Activated naive CD4-positive, alpha-beta T cell treated with anti-CD3 and anti-CD28 coated beads for 36 hours (primary cell): ENCODE measurements at regions of chr22 and their contacts with region 1.

Region 1: GRCh38 chr22:31272522-31273446 is 19.5 kb downstream of the PIK3IP1 start:
- DNase-seq: peak; percentile 76
- H3K4me3 Mint-ChIP-seq: no peak overlapping the region
- H3K27ac Mint-ChIP-seq: no peak overlapping the region
- H3K4me1 Mint-ChIP-seq: peaks cover 58% of the 10 kb centered on the region
- H3K27me3 Mint-ChIP-seq: no peaks in the 10 kb centered on the region

Region 2: DNA sequence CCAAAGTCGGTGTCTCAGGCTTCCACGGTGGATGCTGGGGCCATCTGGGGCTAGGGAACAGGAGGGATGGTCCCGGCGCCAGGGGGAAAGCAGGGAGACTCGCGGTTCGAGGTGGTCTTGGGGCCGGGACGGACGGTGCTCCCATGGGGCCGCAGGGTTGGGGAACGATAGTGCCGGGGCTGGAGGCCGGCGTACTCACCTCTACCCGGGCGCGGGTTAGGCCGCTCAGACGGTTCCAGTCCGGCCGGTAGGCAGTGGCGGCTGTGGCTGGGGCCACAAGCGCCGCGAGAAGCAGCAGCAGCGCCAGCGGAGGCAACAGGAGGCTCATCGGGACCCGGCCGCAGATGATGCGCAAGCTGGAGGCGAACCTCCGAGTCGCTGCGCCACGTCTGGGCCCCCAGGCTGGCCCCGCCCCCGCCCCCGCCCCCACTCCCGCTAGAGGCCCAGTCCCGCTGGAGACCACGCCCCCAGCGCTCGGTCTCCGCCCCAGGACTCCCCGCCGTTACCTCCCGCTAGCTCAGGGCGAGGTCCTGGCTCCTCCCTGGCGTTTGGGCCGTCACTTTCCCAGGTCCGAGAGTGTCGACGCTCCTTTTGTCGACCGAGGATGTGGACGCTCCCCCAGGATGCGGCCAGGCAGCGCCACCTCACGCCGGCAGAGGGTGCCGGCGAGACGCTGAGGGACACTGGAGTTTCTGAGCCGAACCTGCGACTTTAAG is 165.4 kb before region 1 on chr22 and contains the start of gene SELENOM:
- CTCF ChIA-PET with region 1: interaction called, 13 read pairs
- intact Hi-C with region 1: loop called (anchors 2 kb)
- DNase-seq: peak; percentile 92
- H3K4me3 Mint-ChIP-seq: peak within 1 kb of the TSS; percentile 89
- H3K27ac Mint-ChIP-seq: peak within 1 kb of the TSS; percentile 76
- H3K4me1 Mint-ChIP-seq: peaks cover 19% of the 10 kb centered on the region
- H3K27me3 Mint-ChIP-seq: no peaks in the 10 kb centered on the region
- total RNA-seq, gene SELENOM: 9.3 to 11.0 TPM

Region 3: GRCh38 chr22:31127181-31127772 is 145.5 kb before region 1 on chr22:
- CTCF ChIA-PET with region 1: no interaction called
- intact Hi-C with region 1: no loop called
- DNase-seq: no peak
- H3K4me3 Mint-ChIP-seq: no peak overlapping the region
- H3K27ac Mint-ChIP-seq: no peak overlapping the region
- H3K4me1 Mint-ChIP-seq: no peaks in the 10 kb centered on the region
- H3K27me3 Mint-ChIP-seq: peaks cover 4% of the 10 kb centered on the region

Region 4: GRCh38 chr22:31179356-31179755 is 93.4 kb before region 1 on chr22:
- CTCF ChIA-PET with region 1: no interaction called
- intact Hi-C with region 1: no loop called
- DNase-seq: no peak
- H3K4me3 Mint-ChIP-seq: no peak overlapping the region
- H3K27ac Mint-ChIP-seq: no peak overlapping the region
- H3K4me1 Mint-ChIP-seq: peaks cover 27% of the 10 kb centered on the region
- H3K27me3 Mint-ChIP-seq: no peaks in the 10 kb centered on the region

Region 5: DNA sequence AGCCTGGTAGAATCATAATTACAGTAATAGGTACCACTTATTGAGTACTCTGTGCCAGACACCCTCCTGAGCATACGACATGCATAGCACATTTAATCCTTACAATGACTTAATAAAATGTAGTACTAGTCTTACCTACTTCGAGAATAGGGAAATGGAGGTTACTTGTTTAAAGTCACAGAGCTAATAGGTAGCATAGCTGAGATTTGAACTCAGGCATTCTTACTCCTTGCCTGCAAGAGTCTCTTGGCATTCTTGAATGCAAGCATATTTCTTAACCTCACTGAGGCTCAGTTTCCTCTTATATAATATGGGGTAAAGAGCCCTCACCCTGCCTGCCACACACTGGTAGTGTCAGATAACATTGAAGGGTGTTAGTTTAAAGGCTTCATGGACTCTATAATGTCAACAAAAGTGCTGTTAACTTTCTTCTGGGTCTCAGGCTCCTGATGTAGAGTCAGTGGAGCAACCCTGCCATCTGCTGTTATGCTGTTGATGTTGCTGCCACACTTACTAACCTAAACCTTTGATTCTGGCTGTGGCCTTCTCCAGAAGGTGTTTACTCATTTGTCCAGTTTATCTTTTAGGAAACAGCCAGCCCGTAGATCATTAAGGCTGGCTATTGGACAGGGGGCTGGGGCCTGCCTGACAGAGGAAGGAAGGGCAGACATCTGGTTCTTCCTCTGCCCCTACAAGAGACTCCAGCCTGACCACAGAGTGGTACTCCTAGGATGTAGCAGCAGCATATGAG is 41.7 kb before region 1 on chr22:
- CTCF ChIA-PET with region 1: interaction called, 10 read pairs
- intact Hi-C with region 1: no loop called
- DNase-seq: peak; percentile 60
- H3K4me3 Mint-ChIP-seq: no peak overlapping the region
- H3K27ac Mint-ChIP-seq: no peak overlapping the region
- H3K4me1 Mint-ChIP-seq: peaks cover 28% of the 10 kb centered on the region
- H3K27me3 Mint-ChIP-seq: no peaks in the 10 kb centered on the region

Region 6: GRCh38 chr22:31284281-31285155 is 11.7 kb after region 1 on chr22:
- CTCF ChIA-PET with region 1: interaction called, 32 read pairs
- intact Hi-C with region 1: no loop called
- DNase-seq: no peak
- H3K4me3 Mint-ChIP-seq: no peak overlapping the region
- H3K27ac Mint-ChIP-seq: peak overlapping the region; percentile 100
- H3K4me1 Mint-ChIP-seq: peaks cover 91% of the 10 kb centered on the region
- H3K27me3 Mint-ChIP-seq: no peaks in the 10 kb centered on the region

Region 7: GRCh38 chr22:31340360-31340759 is 67.6 kb after region 1 on chr22:
- CTCF ChIA-PET with region 1: no interaction called
- intact Hi-C with region 1: no loop called
- DNase-seq: no peak
- H3K4me3 Mint-ChIP-seq: no peak overlapping the region
- H3K27ac Mint-ChIP-seq: peak overlapping the region; percentile 55
- H3K4me1 Mint-ChIP-seq: peaks cover 76% of the 10 kb centered on the region
- H3K27me3 Mint-ChIP-seq: no peaks in the 10 kb centered on the region